ENCODE measurements at regions of chr5 and their contacts with region 1.

Region 1: DNA sequence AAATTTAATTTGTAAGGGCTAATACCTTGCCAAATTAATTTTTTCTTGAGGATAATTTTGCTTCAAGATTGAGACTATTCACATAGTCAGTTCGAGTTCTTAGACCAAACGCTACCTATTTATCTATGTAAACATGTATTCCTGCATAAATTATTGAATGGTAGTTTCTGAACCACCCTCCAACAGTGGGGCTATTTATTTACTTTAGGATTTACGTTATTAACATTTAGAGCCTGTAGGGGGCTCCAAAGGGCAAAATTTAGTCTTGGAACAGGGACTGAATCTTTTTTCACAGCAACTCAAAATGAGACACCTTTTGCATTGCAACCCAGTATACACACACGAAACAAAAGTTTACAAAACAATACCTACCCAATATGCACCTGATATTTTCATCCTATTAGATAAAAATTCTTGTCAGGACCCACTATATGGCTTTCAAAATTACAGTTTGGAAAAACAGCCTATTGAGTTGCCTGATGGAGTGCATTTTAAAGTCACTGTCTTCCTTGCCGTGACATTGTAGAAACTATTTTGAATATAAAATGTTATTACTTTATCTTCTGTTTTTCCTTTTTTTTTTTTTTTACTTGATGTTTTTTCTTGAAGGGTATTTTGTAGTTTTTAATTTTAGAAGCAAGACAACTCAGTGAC is 47.1 kb upstream of the POU4F3 start:
- DNase-seq: no peak
- H3K4me3 ChIP-seq: no peak overlapping the region
- H3K27ac ChIP-seq: no peak overlapping the region
- H3K4me1 ChIP-seq: no peaks in the 10 kb centered on the region
- H3K27me3 ChIP-seq: no peaks in the 10 kb centered on the region
- CTCF ChIP-seq: peak in 5 of 6 experiments; percentile 21 to 51 (median 36)
- POLR2A ChIP-seq: no peak

Region 2: GRCh38 chr5:146340260-146341081 is 48.9 kb after region 1 on chr5:
- intact Hi-C with region 1: no loop called
- DNase-seq: no peak
- H3K4me3 ChIP-seq: peak overlapping the region in 1 of 4 donors; percentile 24
- H3K27ac ChIP-seq: no peak overlapping the region
- H3K4me1 ChIP-seq: peaks cover 0 to 25% (median under 1%) of the 10 kb centered on the region in 3 donors
- H3K27me3 ChIP-seq: peaks cover 15 to 100% (median 58%) of the 10 kb centered on the region in 4 donors
- CTCF ChIP-seq: no peak
- POLR2A ChIP-seq: no peak

Region 3: DNA sequence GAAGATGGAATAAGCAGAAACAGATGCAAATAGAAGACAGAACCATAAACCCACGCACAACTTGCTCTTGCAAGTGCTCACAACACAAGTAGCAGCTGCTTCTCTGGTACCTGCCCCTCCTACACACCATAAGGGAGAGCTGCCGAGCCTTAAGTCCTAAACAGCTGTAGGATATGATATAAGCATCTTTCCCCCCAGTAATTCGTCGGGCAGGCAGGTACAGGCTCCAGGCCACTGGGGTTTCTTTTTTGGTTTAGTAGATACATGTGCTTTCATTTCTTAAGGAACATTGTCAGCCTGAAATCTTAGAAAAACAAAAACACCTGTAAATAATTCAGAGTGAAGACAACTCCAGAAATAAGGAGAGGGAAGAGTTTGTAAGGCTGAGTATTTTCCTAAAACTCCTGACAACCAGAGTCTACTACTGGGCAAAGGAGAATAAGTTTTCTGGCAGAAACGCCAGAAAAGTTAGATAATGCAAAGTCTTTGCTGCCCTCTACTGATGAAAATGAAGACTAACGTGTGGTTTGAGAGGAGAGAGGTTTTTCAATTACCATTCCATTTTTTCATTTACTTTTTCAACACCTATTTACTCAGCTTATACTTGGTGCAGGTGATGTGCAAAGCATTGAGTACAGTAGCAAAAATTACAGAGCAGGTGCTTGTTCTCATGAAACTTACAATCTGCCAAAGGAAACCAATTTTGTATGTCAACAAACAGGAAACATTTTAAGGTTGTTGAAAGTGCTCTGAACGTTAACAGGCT is 135.5 kb after region 1 on chr5:
- intact Hi-C with region 1: loop called (anchors 5 kb)
- DNase-seq: no peak
- H3K4me3 ChIP-seq: no peak overlapping the region
- H3K27ac ChIP-seq: no peak overlapping the region
- H3K4me1 ChIP-seq: peaks cover 0 to 6% (median 4%) of the 10 kb centered on the region in 3 donors
- H3K27me3 ChIP-seq: peaks cover 0 to 34% (median 0%) of the 10 kb centered on the region in 4 donors
- CTCF ChIP-seq: peak; percentile 30 to 70 (median 51)
- POLR2A ChIP-seq: no peak

Region 4: GRCh38 chr5:146528236-146528635 is 236.7 kb after region 1 on chr5:
- intact Hi-C with region 1: no loop called
- DNase-seq: no peak
- H3K4me3 ChIP-seq: no peak overlapping the region
- H3K27ac ChIP-seq: no peak overlapping the region
- H3K4me1 ChIP-seq: no peaks in the 10 kb centered on the region
- H3K27me3 ChIP-seq: peaks cover 0 to 21% (median 0%) of the 10 kb centered on the region in 4 donors
- CTCF ChIP-seq: no peak
- POLR2A ChIP-seq: no peak

Measured in esophagus squamous epithelium (tissue), 5 donors.